ENCODE measurements at regions of chr5 and their contacts with region 1.

Region 1: GRCh38 chr5:32489791-32490582 is 45.4 kb upstream of the ZFR start:
- DNase-seq: peak; percentile 45
- H3K4me3 Mint-ChIP-seq: no peak overlapping the region
- H3K27ac Mint-ChIP-seq: no peak overlapping the region
- H3K4me1 Mint-ChIP-seq: no peaks in the 10 kb centered on the region
- H3K27me3 Mint-ChIP-seq: no peaks in the 10 kb centered on the region

Region 2: DNA sequence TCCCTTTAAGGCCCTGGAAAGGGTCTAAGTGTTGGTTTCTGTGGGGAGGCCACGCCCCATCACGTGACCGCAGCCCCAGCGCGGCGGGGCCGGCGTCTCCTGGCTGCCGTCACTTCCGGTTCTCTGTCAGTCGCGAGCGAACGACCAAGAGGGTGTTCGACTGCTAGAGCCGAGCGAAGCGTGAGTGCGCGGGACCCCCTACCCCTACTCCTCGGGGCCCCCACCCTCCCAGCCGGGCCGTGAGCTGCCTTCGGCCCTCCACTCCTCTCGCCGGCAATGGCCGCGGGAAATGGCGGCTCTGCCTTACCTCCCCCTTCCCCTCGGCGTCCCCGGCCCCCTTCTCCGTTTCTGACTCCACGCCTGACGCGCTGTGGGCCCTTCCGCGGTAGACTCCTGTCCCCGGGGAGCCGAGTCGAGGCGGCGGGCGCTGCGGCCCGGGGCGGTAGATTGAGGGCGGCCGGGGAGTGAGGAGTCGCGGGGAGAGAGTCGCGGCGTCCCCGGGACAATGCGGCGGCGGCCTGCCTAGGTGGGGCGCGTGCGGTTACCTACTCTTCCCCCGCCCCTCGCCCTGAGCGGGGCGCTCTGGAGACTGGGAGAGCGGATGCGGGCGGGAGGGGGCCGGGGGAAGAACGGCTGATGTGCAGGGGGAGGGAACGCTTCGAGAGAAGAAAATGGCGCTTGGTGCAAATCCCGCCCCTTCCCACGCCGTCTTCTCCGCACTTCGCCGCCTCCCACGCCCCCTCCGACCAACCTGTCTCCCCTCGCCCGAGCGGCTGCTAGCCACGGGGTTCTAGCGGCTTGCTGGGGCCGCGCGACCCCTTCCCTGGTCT is 95.7 kb after region 1 on chr5 and contains the start of gene SUB1:
- intact Hi-C with region 1: loop called (anchors 1 kb)
- DNase-seq: peak; percentile 90
- H3K4me3 Mint-ChIP-seq: peak within 1 kb of the TSS; percentile 96
- H3K27ac Mint-ChIP-seq: peak within 1 kb of the TSS; percentile 99
- H3K4me1 Mint-ChIP-seq: peaks cover 55% of the 10 kb centered on the region
- H3K27me3 Mint-ChIP-seq: no peaks in the 10 kb centered on the region
- total RNA-seq, gene SUB1: 380 and 404 TPM in 2 replicates

Region 3: DNA sequence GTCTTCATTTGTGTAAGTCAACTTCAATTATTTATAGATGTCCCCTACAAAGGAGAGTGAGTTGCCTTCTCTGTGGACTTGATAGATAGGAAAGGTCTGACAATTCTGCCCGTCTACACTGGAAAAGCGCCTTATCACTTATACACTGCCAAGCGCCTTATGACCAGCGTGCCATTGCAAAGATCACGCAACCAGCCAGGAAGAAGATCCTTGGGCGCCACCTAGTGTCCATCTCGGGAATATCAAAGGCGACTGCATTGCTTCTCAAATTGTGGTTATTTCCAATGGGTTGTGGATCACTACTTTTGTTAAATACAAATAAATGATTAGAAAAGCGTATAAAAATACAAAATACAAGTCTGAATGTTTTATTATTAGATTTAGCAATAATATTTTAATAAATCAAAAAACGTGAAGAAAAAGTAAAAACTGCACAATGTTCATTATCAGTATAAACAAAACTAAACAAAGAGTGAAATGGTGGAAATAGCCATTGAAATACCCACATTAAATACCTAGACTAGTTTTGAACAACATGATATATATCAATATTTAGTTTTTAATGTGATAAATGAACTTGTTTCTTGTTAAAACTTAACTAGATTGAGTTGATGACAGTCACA is 123.2 kb after region 1 on chr5:
- intact Hi-C with region 1: loop called (anchors 1 kb)
- DNase-seq: peak; percentile 72
- H3K4me3 Mint-ChIP-seq: no peak overlapping the region
- H3K27ac Mint-ChIP-seq: no peak overlapping the region
- H3K4me1 Mint-ChIP-seq: peaks cover 5% of the 10 kb centered on the region
- H3K27me3 Mint-ChIP-seq: no peaks in the 10 kb centered on the region

Measured in activated T-helper 2 cell treated with anti-CD3 and anti-CD28 coated beads, Interferon-gamma antibody, Interleukin-2, Interleukin-4, amounts not matched to agents 10 μg/mL and 5 μg/mL and 100 μg/mL, durations not matched to agents 14 hours and 24 hours and 36 hours (primary cell).